ENCODE measurements at regions of chr5 and their contacts with region 1.

Region 1: DNA sequence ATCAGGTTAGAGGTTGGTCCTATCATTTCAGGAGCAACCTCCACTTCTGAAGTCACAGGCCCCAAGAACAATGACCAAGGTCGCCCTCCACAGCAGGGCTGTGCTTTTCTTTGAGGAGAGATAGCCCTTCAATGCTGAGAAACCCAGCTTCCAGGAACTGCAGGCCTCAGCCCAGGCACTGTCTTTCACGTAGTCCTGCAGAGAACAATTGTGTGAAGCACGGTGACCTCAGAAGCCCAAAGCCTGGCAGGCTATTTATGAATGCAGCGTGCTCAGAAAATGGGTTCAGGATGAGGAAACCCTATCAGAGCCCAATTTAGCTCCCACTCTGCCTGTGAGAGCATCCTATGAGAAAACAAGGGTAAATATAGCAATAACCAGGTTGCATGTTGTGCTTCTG is 388.3 kb downstream of the PLK2 start:
- DNase-seq: peak; percentile 54 to 86 (median 79)
- ATAC-seq: peak; percentile 94 to 98 (median 97)
- H3K4me3 ChIP-seq: no peak overlapping the region
- H3K27ac ChIP-seq: peak overlapping the region; percentile 3 to 85 (median 78)
- H3K4me1 ChIP-seq: peaks cover 6 to 60% (median 46%) of the 10 kb centered on the region in 12 donors
- H3K27me3 ChIP-seq: no peaks in the 10 kb centered on the region
- CTCF ChIP-seq: no peak
- POLR2A ChIP-seq: no peak

Region 2: GRCh38 chr5:57895766-57896165 is 175.8 kb before region 1 on chr5:
- intact Hi-C with region 1: loop called in 1 of 10 experiments (anchors 10 kb)
- DNase-seq: no peak
- ATAC-seq: no peak
- H3K4me3 ChIP-seq: no peak overlapping the region
- H3K27ac ChIP-seq: no peak overlapping the region
- H3K4me1 ChIP-seq: peaks cover 0 to 9% (median 0%) of the 10 kb centered on the region in 12 donors
- H3K27me3 ChIP-seq: no peaks in the 10 kb centered on the region
- CTCF ChIP-seq: no peak
- POLR2A ChIP-seq: no peak

Region 3: GRCh38 chr5:58188262-58188651 is 116.7 kb after region 1 on chr5:
- intact Hi-C with region 1: loop called in 1 of 10 experiments (anchors 5 kb)
- DNase-seq: no peak
- ATAC-seq: peak in 2 of 4 donors; percentile 18 to 24
- H3K4me3 ChIP-seq: peak overlapping the region in 1 of 12 donors; percentile 14
- H3K27ac ChIP-seq: peak overlapping the region in 3 of 12 donors; percentile 9 to 20 (median 15)
- H3K4me1 ChIP-seq: peaks cover 0 to 18% (median under 1%) of the 10 kb centered on the region in 12 donors
- H3K27me3 ChIP-seq: no peaks in the 10 kb centered on the region
- CTCF ChIP-seq: peak in 4 of 12 donors; percentile 7 to 27 (median 20)
- POLR2A ChIP-seq: no peak

Region 4: GRCh38 chr5:58246461-58246944 is 174.9 kb after region 1 on chr5:
- intact Hi-C with region 1: loop called in 6 of 10 experiments (anchors 5 to 10 kb)
- DNase-seq: no peak
- ATAC-seq: peak in 3 of 4 donors; percentile 35 to 69 (median 40)
- H3K4me3 ChIP-seq: no peak overlapping the region
- H3K27ac ChIP-seq: peak overlapping the region in 9 of 12 donors; percentile 30 to 84 (median 56)
- H3K4me1 ChIP-seq: peaks cover 0 to 48% (median 10%) of the 10 kb centered on the region in 12 donors
- H3K27me3 ChIP-seq: no peaks in the 10 kb centered on the region
- CTCF ChIP-seq: no peak
- POLR2A ChIP-seq: no peak

Region 5: DNA sequence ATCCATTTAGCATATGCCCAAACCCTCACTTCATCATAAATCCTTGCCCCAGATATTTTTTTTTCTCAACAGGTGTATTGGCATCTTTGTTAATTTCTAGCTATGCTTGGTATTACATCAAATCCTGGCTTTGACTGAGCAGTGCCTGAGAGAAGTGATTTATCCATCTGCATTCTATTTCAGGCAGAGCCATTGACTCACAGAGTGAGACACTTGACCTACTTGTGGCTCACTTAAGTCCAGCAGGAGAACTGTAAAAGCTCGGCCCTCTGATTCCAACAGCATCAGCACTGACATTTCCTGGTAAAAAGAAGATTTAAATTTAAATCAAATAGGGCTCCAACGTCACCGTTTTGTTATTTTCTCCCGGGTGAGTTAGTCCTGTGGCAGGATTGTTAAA is 294.9 kb after region 1 on chr5:
- intact Hi-C with region 1: loop called in 1 of 10 experiments (anchors 10 kb)
- DNase-seq: peak in 1 of 5 donors; percentile 26
- ATAC-seq: peak; percentile 82 to 96 (median 91)
- H3K4me3 ChIP-seq: no peak overlapping the region
- H3K27ac ChIP-seq: peak overlapping the region in 9 of 12 donors; percentile 4 to 76 (median 55)
- H3K4me1 ChIP-seq: peaks cover 0 to 17% (median 0%) of the 10 kb centered on the region in 12 donors
- H3K27me3 ChIP-seq: no peaks in the 10 kb centered on the region
- CTCF ChIP-seq: no peak
- POLR2A ChIP-seq: no peak